PC-3 (cell line): ENCODE measurements at regions of chr18 and their contacts with region 1.

Region 1: DNA sequence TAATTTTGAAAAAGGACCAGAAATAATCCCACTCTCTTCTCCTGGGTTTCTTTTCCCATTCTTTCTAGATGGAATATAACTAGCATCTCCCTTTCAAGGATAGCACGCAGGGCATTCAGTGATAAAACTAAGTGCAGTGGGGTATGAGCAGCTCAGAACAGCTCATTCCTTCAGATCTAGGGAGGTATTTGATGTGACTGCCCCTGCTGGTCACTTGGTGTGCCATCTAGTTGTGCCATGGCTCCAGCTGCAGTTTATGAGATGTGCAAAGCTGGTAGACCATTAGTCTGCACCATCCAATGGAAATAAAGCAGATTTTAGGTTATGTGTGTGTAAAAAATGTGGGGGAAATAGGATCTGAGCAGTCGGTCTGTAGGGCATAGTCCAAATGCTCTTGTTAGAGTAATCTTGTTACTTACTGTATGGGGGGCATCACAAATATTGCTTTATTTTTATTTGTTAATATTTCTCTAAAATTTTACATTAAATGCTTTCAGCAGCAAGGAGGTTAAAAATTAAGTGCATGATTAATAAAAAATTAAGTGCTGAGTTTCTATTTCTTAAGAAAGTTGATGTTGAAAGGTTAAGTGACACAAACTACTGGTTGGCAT is 38.9 kb downstream of the CTAGE1 start:
- DNase-seq: peak; percentile 67
- ATAC-seq: peak; percentile 86
- H3K4me3 ChIP-seq: no peak overlapping the region
- H3K27ac ChIP-seq: no peak overlapping the region
- H3K4me1 ChIP-seq: no peaks in the 10 kb centered on the region
- H3K27me3 ChIP-seq: no peaks in the 10 kb centered on the region
- CTCF ChIP-seq: peak; percentile 75

Region 2: DNA sequence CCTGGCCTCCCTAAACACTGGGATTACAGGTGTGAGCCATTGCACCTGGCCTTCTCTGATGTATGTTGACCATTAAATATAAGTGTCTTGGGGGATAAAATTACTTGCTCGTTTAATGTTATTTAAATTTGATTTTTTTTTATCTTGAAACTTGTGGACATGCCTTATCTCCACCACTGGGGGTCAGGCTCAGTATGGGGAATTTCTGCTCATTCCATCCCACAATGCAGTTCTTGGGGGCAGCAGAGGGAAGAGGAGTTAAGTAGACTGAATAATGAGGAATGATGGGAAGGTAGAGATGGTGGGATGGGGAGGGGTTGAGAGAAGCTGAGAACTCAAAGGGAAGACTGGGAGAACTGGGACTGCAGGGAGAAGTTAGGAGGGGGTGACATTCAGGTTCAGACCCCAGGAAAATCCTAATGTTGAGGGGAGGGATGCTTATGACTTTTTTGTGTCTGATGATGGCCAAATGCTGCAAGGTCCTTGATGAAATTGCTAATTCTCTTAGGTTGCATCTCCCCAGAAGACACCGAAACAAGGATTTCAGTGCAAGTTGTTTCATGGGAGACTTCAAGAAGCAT is 463.9 kb before region 1 on chr18:
- CTCF ChIA-PET with region 1: no interaction called
- POLR2A ChIA-PET with region 1: no interaction called
- intact Hi-C with region 1: loop called (anchors 10 kb)
- DNase-seq: peak; percentile 67
- ATAC-seq: peak; percentile 67
- H3K4me3 ChIP-seq: no peak overlapping the region
- H3K27ac ChIP-seq: no peak overlapping the region
- H3K4me1 ChIP-seq: no peaks in the 10 kb centered on the region
- H3K27me3 ChIP-seq: no peaks in the 10 kb centered on the region
- CTCF ChIP-seq: peak; percentile 87